Mucosa of descending colon (tissue), 3 donors: ENCODE measurements at regions of chr6 and their contacts with region 1.

Region 1: DNA sequence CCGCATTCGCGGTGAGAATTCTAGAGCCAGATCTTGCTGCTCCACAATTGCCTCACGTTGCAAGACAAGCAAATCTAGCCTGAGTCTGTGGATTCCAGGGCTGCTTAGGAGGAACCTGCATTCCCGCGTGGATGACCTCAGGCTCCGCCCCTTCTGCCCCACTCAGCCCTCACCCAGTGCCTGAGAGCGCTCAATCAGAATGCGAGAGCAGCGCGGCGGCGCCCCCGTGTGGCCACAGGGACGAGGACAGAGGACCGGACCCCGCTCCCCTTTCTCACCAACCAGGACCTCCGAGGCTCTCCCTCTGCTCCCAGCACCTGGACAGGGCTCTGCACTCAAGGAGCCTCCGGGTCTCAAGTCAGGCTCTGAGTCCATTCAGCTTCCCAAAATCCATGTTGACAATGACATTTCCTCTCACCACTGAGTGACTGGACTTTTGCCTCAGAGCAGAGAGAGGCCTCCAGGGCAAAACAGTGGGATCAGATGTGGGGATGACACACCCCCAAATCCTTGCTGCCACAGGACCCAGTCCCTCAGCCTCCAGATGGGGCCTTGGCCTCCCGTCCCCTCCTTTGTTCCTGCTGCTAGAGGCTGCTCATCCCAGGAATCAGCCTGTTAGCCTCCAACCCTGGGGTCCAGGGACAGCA is 52.0 kb downstream of the RPP21 start:
- DNase-seq: peak; percentile 78 to 90 (median 86)
- ATAC-seq: peak; percentile 76
- H3K4me3 ChIP-seq: no peak overlapping the region
- H3K4me1 ChIP-seq: no peaks in the 10 kb centered on the region
- CTCF ChIP-seq: peak; percentile 73

Region 2: GRCh38 chr6:30212865-30213666 is 183.9 kb before region 1 on chr6 and contains the start of gene TRIM26:
- intact Hi-C with region 1: loop called in 1 of 2 experiments (anchors 10 kb)
- DNase-seq: peak; percentile 98 to 99 (median 98)
- ATAC-seq: peak; percentile 90
- H3K4me3 ChIP-seq: peak within 1 kb of the TSS; percentile 39
- H3K4me1 ChIP-seq: peaks cover 31% of the 10 kb centered on the region
- CTCF ChIP-seq: no peak
- total RNA-seq, gene TRIM26: 52.6 to 58.1 (median 53.0) TPM

Region 3: DNA sequence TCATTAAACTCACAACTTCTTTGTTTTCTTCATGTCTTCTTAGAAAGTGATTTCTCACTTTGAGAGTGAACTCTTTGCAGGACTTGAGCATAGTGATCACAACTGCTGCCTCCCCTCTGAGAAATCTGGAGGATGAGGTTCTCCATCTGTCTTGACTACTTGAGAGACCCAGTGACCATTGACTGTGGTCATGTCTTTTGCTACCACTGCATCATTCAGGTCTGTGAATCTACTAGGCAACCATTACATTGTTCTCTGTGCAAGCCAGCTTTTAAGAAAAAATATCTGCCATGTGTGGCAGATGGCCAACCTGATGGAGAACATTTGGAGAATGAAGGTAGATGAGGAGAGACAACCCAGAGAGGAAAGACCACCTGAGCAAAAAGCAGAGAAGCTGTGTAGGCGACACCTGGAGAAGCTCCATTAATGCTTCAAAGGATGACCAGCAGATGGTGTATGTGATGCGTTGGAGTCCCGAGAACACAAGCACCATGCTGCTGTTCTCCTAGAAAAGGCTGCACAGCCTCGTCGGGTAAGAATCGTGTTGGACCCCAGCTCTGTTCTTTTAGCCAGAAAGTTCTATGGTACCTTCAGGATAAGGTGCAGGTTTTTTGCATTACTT is 158.7 kb before region 1 on chr6:
- intact Hi-C with region 1: loop called in 1 of 2 experiments (anchors 10 kb)
- DNase-seq: peak in 1 of 3 donors; percentile 21
- ATAC-seq: peak; percentile 44
- H3K4me3 ChIP-seq: no peak overlapping the region
- H3K4me1 ChIP-seq: no peaks in the 10 kb centered on the region
- CTCF ChIP-seq: no peak